PC-3 (cell line): ENCODE measurements at regions of chr4 and their contacts with region 1.

Region 1: DNA sequence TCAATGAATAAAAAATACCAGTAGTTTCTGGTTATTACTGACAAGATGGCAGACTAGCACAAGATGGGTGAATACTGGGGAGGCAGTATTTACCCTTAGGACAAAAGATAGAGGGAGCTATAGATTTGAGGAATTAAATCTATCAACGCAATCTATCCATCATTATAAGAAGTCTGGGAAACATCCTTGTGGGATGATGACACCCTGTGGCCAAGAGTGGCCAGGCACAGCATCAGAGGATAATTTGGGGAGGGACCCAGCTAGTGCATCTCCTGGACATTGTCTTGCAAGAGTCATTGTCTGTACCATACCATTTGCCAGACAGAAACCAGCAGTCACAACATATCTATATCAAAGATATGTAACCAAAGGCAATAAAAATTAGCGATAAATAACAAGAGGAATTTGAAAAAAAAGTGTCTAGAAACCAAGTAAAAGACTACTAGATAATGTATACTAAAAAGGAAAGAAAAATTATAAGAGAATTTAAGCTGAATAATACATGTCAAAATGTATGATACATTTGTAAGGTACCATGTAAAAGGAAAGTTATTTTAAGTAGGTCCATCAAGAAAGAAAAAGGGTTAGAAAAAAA is 22.9 kb downstream of the KCTD8 start:
- DNase-seq: peak; percentile 66
- ATAC-seq: peak; percentile 71
- H3K4me3 ChIP-seq: no peak overlapping the region
- H3K27ac ChIP-seq: no peak overlapping the region
- H3K4me1 ChIP-seq: no peaks in the 10 kb centered on the region
- H3K27me3 ChIP-seq: no peaks in the 10 kb centered on the region
- CTCF ChIP-seq: peak; percentile 82

Region 2: DNA sequence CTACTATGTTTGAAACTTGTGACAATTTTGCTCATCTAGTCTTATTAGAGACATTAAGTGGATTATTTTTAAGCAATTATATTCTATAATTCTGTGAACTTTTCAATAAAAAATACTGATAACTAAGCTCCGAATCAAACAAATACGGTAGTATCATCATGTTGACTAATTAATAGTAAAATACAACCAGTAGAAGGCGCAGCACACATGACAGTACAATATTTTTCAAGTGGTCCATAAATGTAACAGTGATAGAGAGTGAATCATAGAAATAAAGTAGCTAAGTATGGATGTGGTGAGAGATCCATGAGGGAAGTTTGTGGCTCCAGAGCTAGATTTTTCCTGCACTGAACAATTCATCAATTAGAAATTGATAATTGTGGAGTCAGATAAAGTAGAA is 643.3 kb before region 1 on chr4:
- CTCF ChIA-PET with region 1: interaction called, 13 read pairs
- POLR2A ChIA-PET with region 1: no interaction called
- intact Hi-C with region 1: loop called (anchors 1 kb)
- DNase-seq: peak; percentile 54
- ATAC-seq: peak; percentile 65
- H3K4me3 ChIP-seq: peak overlapping the region; percentile 62
- H3K27ac ChIP-seq: no peak overlapping the region
- H3K4me1 ChIP-seq: no peaks in the 10 kb centered on the region
- H3K27me3 ChIP-seq: no peaks in the 10 kb centered on the region
- CTCF ChIP-seq: peak; percentile 69

Region 3: DNA sequence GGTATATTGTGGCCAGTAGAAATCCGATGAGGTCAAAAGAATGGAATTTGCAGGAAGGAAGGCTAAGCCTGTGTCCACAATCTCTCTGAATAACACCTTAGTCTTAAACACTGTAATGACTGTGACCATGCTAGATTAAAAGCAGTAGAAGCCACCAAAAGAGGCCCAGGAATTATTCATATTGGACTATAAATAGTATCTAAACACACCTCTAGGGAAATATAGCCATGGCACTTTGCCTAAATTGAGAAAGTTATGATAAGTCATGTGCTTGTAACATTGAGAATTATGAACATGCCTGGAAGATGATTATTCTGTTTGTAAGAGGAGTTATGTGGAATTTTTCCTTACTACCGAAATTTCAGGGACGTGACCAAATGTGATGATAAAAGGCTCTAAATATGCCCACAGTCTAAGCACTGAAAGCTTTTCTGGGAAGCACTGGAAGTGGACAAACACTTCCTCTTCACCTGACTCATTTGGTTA is 275.6 kb before region 1 on chr4:
- CTCF ChIA-PET with region 1: no interaction called
- POLR2A ChIA-PET with region 1: no interaction called
- intact Hi-C with region 1: loop called (anchors 5 kb)
- DNase-seq: peak; percentile 87
- ATAC-seq: peak; percentile 93
- H3K4me3 ChIP-seq: peak overlapping the region; percentile 13; the same call in 1 of the 2 replicates
- H3K27ac ChIP-seq: peak overlapping the region; percentile 82
- H3K4me1 ChIP-seq: peaks cover 50% of the 10 kb centered on the region
- H3K27me3 ChIP-seq: no peaks in the 10 kb centered on the region
- CTCF ChIP-seq: no peak

Region 4: GRCh38 chr4:44368413-44369167 is 57.1 kb before region 1 on chr4:
- CTCF ChIA-PET with region 1: interaction called, 4 read pairs
- POLR2A ChIA-PET with region 1: no interaction called
- intact Hi-C with region 1: loop called (anchors 5 kb)
- DNase-seq: peak; percentile 61
- ATAC-seq: peak; percentile 96
- H3K4me3 ChIP-seq: peak overlapping the region; percentile 35; the same call in 1 of the 2 replicates
- H3K27ac ChIP-seq: peak overlapping the region; percentile 61
- H3K4me1 ChIP-seq: peaks cover 16% of the 10 kb centered on the region
- H3K27me3 ChIP-seq: no peaks in the 10 kb centered on the region
- CTCF ChIP-seq: no peak